CD14-positive monocyte (primary cell): ENCODE measurements at regions of chr12 and their contacts with region 1.

Region 1: DNA sequence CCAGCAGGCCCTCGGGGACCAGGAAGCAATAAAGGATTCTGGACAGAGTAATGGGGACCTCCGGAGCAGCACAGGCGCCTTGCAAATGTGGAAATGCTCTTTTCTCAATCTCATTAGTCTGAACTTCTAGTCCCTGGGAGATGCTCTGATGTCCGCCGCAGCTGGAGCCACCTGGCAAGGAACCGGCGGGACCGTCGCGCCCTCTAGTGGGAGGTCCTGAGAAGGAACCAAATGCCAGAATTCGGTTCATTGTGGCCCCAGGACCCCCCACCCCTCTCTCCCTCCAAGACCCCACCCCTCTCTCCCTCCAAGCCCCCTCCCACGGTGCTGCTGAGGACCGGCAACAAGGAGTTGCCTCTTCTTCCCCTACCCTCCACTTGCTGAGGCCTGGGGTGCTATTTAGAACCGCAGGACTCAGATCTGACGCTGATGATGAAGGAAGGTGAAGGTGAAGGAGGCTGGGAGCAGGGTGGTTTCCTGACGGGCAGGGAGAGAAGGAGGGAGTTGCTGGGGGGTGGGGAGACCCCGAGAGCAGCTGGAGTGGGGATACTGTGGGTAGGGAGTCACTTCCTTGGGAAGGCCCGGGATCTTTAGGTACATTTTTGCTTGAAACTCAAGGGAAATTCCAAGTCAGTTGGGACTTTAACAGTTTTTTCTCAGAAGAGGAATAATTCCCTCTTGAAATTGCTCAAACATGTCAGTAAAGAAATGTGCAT is 42.5 kb downstream of the SMIM41 start:
- DNase-seq: peak; percentile 38 to 61 (median 57)
- H3K4me3 ChIP-seq: no peak overlapping the region
- H3K4me3 Mint-ChIP-seq: peak overlapping the region in 1 of 2 donors; percentile 63
- H3K27ac ChIP-seq: no peak overlapping the region
- H3K27ac Mint-ChIP-seq: peak overlapping the region in 4 of 7 donors; percentile 42 to 79 (median 70)
- H3K4me1 ChIP-seq: peaks cover 28 to 41% of the 10 kb centered on the region in 2 donors
- H3K4me1 Mint-ChIP-seq: peaks cover 48% of the 10 kb centered on the region
- H3K27me3 ChIP-seq: peaks cover 0 to 8% of the 10 kb centered on the region in 2 donors
- H3K27me3 Mint-ChIP-seq: peaks cover 23 to 38% (median 25%) of the 10 kb centered on the region in 3 donors
- CTCF ChIP-seq: peak; percentile 90

Region 2: GRCh38 chr12:51868821-51869502 is 253.0 kb before region 1 on chr12:
- intact Hi-C with region 1: no loop called
- DNase-seq: no peak
- H3K4me3 ChIP-seq: peak overlapping the region; percentile 18 to 66 (median 33)
- H3K4me3 Mint-ChIP-seq: peak overlapping the region; percentile 68 to 87
- H3K27ac ChIP-seq: no peak overlapping the region
- H3K27ac Mint-ChIP-seq: peak overlapping the region in 2 of 7 donors; percentile 18 to 72
- H3K4me1 ChIP-seq: peaks cover 62 to 73% of the 10 kb centered on the region in 2 donors
- H3K4me1 Mint-ChIP-seq: peaks cover 65% of the 10 kb centered on the region
- H3K27me3 ChIP-seq: peaks cover 3 to 32% of the 10 kb centered on the region in 2 donors
- H3K27me3 Mint-ChIP-seq: peaks cover 33 to 43% (median 38%) of the 10 kb centered on the region in 3 donors
- CTCF ChIP-seq: no peak

Region 3: DNA sequence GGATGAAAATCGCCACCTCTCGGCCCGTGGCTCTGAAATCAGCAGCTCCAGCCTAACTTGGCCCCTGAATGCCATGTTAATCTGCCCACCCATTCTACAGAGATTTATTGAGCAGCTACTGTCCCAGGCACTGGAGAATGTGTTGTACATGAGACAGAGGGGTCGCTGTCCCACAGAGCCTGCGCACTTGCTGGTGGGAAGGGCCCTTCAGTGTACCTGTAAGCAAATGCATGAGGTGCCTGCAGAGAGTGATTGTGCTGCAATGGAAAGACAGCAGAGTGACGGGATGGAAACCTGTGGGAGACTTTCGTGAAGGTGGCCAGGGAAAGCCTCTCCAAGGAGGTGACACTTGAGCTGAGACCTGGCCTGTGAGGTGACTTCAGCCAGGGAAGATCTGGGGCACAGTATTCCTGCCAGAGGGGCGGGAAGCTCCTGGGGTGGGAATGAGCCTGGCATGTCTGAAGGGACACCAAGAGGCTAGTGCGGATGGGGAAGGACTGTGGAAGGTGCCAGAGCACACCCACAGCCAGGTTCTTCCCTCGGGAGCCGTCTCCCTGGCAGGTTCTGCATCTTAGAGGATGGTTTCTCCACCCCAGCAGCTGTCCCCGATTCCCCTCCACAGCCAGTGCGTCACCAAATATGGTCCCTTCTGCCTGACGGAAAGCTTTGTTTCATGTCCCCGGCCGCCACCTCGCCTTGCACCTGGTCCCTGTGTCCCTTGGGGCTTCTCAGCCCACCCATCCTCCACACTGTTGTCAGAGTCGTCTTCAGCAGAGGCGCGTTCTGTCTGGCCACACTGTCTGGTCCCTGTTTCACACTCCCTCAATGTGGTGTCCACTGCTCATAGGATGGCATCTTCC is 33.8 kb before region 1 on chr12:
- intact Hi-C with region 1: loop called (anchors 1 to 5 kb)
- DNase-seq: no peak
- H3K4me3 ChIP-seq: no peak overlapping the region
- H3K4me3 Mint-ChIP-seq: peak overlapping the region in 1 of 2 donors; percentile 0
- H3K27ac ChIP-seq: no peak overlapping the region
- H3K27ac Mint-ChIP-seq: peak overlapping the region in 1 of 7 donors; percentile 48
- H3K4me1 ChIP-seq: peaks cover 0 to 3% of the 10 kb centered on the region in 2 donors
- H3K4me1 Mint-ChIP-seq: peaks cover 2% of the 10 kb centered on the region
- H3K27me3 ChIP-seq: peaks cover 0 to 14% of the 10 kb centered on the region in 2 donors
- H3K27me3 Mint-ChIP-seq: peaks cover 12 to 49% (median 35%) of the 10 kb centered on the region in 3 donors
- CTCF ChIP-seq: no peak

Region 4: DNA sequence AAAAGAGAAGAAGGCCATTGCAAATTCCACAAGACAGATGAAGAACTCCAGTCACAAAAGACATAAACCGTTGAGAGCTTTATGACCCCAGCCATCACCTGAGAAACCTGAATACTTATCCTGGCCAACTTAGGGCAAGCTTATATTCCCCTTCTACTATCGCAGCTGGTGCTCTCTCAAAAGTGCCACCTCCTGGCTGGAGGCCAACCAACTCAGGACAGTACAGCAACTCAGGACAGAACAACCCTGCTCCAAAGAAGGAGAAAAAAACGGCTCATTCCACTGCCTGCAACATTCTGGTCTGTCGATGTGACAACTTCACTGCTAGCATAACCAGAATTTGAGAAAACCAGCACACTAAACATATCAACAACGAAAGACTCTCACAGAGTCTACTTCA is 339.7 kb after region 1 on chr12:
- intact Hi-C with region 1: no loop called
- DNase-seq: no peak
- H3K4me3 ChIP-seq: no peak overlapping the region
- H3K4me3 Mint-ChIP-seq: no peak overlapping the region
- H3K27ac ChIP-seq: no peak overlapping the region
- H3K27ac Mint-ChIP-seq: peak overlapping the region in 1 of 7 donors; percentile 9
- H3K4me1 ChIP-seq: no peaks in the 10 kb centered on the region
- H3K4me1 Mint-ChIP-seq: no peaks in the 10 kb centered on the region
- H3K27me3 ChIP-seq: peaks cover 3% of the 10 kb centered on the region in 2 donors
- H3K27me3 Mint-ChIP-seq: peaks cover 5 to 24% (median 14%) of the 10 kb centered on the region in 3 donors
- CTCF ChIP-seq: no peak

Region 5: GRCh38 chr12:52506858-52507715 is 385.1 kb after region 1 on chr12:
- intact Hi-C with region 1: no loop called
- DNase-seq: no peak
- H3K4me3 ChIP-seq: no peak overlapping the region
- H3K4me3 Mint-ChIP-seq: no peak overlapping the region
- H3K27ac ChIP-seq: no peak overlapping the region
- H3K27ac Mint-ChIP-seq: no peak overlapping the region
- H3K4me1 ChIP-seq: no peaks in the 10 kb centered on the region
- H3K4me1 Mint-ChIP-seq: no peaks in the 10 kb centered on the region
- H3K27me3 ChIP-seq: peaks cover 0 to 4% of the 10 kb centered on the region in 2 donors
- H3K27me3 Mint-ChIP-seq: peaks cover 11 to 23% (median 14%) of the 10 kb centered on the region in 3 donors
- CTCF ChIP-seq: peak; percentile 25